ENCODE measurements at regions of chr6 and their contacts with region 1.

Region 1: GRCh38 chr6:163579880-163580295 is 165.4 kb downstream of the QKI start:
- DNase-seq: peak; percentile 57
- ATAC-seq: peak; percentile 40
- H3K4me3 ChIP-seq: no peak overlapping the region
- H3K27ac ChIP-seq: no peak overlapping the region
- H3K4me1 ChIP-seq: peaks cover 9% of the 10 kb centered on the region; the same call in 1 of the 2 replicates
- H3K27me3 ChIP-seq: no peaks in the 10 kb centered on the region
- CTCF ChIP-seq: peak; percentile 48; the same call in 1 of the 2 replicates

Region 2: DNA sequence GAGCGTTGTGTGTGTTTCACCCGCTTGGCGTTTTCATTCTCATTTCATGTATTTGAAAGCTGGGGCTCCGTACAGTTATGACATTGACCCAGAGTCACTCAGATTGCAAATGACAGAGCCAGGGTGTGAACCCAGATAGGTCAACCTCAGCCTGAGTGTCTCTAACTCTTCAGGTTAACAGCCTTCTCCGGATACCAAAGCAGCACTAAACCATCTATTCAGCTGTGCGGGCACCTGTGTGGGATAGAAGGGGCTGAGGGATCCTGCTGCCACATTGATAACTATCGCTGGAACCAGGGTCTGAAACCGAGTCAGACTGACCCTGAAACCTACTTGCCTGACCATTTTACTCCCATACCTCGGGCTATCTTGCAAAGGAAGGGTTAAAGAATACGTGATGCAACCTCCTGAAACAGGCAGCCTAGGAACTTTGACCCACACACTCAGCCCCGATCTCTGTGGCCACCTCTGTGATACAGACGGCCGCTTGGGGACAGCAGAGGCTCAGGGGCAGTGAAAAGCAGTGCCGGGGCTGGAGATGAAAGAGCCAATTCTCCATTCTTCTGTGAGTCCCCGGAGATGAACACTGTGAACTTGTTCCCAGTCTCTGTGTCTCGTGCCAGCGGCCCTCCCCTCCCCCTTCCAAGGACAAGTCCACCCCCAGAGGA is 398.9 kb before region 1 on chr6:
- CTCF ChIA-PET with region 1: no interaction called
- POLR2A ChIA-PET with region 1: no interaction called
- intact Hi-C with region 1: loop called (anchors 5 kb)
- DNase-seq: peak; percentile 77
- ATAC-seq: peak; percentile 97
- H3K4me3 ChIP-seq: no peak overlapping the region
- H3K27ac ChIP-seq: no peak overlapping the region
- H3K4me1 ChIP-seq: peaks cover 4% of the 10 kb centered on the region; the same call in 1 of the 2 replicates
- H3K27me3 ChIP-seq: no peaks in the 10 kb centered on the region
- CTCF ChIP-seq: peak; percentile 84

Region 3: GRCh38 chr6:163489584-163489983 is 90.3 kb before region 1 on chr6:
- CTCF ChIA-PET with region 1: no interaction called
- POLR2A ChIA-PET with region 1: no interaction called
- intact Hi-C with region 1: no loop called
- DNase-seq: peak; percentile 75
- ATAC-seq: peak; percentile 56
- H3K4me3 ChIP-seq: peak overlapping the region; percentile 9; the same call in 1 of the 2 replicates
- H3K27ac ChIP-seq: peak overlapping the region; percentile 91
- H3K4me1 ChIP-seq: peaks cover 55% of the 10 kb centered on the region
- H3K27me3 ChIP-seq: no peaks in the 10 kb centered on the region
- CTCF ChIP-seq: no peak

Region 4: GRCh38 chr6:163738725-163739407 is 159.0 kb after region 1 on chr6:
- CTCF ChIA-PET with region 1: no interaction called
- POLR2A ChIA-PET with region 1: no interaction called
- intact Hi-C with region 1: no loop called
- DNase-seq: no peak
- ATAC-seq: no peak
- H3K4me3 ChIP-seq: no peak overlapping the region
- H3K27ac ChIP-seq: no peak overlapping the region
- H3K4me1 ChIP-seq: no peaks in the 10 kb centered on the region
- H3K27me3 ChIP-seq: peaks cover 13% of the 10 kb centered on the region; the same call in 1 of the 2 replicates
- CTCF ChIP-seq: no peak

Measured in PC-3 (cell line).